Motor neuron (in vitro differentiated cells): ENCODE measurements at regions of chr12 and their contacts with region 1.

Region 1: DNA sequence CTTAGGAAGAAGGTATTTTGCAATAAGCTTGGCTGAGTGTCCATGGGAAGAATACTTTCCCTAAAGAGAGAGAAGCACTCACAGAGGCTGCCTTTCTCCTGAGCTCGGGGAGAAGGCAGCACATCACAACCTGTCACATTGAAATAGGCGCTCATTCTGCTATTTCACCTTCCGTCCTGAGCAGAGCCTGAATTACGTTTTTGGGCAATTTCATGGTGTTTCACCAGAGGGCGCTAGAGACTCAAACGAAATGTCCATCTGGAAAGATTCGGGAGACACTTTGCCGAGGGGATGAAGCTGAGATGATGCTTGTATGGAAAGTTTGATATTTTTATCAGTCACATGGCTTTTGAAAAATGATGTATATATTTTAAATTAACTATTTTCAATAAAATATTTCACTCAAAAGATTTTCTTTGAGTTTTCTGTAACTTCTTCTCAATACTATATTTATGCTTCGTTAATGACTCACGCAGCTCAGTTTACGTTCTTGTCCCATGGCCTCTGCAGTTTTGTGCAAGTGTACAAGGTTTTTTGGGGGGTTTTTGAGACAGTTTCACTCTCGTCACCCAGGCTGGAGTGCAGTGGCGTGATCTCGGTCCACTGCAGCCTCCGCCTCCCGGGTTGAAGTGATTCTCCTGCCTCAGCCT is 17.4 kb upstream of the B4GALNT3 start:
- ATAC-seq: peak in 5 of 8 experiments; percentile 22 to 58 (median 43)
- H3K4me3 ChIP-seq: no peak overlapping the region
- H3K27ac ChIP-seq: no peak overlapping the region
- H3K4me1 ChIP-seq: no peaks in the 10 kb centered on the region

Region 2: DNA sequence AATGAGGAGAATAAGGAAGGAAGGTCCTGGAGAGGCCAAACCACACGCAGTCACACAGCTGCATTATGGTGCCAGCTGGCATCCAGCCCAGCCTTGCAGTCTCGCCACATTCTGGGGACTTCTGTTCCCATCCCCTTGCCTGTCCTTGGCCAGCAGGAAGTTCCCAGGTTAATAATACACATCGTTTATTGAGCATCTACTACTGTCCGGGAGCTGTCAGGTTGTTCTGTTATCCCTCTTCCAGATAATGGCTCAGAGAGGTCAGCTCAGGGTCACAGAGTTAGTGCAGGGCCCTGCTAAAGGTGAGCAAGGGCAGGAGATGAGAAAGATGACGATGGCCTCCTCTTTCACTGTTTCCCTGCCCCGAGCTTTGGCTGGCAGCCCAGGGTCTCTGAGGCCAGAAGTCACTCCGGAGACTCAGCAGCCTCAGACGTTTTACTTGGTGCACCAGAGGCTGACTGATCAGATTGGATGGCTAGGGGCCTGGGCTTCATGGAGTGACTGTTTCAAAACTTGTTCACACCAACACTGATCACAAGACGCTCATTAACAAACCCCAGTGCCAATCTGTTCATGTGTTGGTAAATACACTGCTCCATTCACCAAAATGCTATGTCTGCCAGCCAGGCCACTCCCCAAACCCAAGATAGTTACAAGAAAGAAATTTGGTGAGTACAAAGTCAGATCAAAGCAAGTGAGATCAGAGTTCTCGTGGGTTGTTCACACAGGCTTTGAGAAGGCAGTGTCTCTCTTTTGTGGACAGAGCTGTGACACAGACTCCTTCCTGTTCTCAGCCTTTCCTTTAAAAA is 96.6 kb after region 1 on chr12:
- in situ Hi-C with region 1: loop called in 2 of 9 experiments (anchors 10 kb)
- ATAC-seq: peak in 2 of 8 experiments; percentile 27 to 44
- H3K4me3 ChIP-seq: no peak overlapping the region
- H3K27ac ChIP-seq: no peak overlapping the region
- H3K4me1 ChIP-seq: peaks cover 16 to 19% of the 10 kb centered on the region in 2 donors

Region 3: DNA sequence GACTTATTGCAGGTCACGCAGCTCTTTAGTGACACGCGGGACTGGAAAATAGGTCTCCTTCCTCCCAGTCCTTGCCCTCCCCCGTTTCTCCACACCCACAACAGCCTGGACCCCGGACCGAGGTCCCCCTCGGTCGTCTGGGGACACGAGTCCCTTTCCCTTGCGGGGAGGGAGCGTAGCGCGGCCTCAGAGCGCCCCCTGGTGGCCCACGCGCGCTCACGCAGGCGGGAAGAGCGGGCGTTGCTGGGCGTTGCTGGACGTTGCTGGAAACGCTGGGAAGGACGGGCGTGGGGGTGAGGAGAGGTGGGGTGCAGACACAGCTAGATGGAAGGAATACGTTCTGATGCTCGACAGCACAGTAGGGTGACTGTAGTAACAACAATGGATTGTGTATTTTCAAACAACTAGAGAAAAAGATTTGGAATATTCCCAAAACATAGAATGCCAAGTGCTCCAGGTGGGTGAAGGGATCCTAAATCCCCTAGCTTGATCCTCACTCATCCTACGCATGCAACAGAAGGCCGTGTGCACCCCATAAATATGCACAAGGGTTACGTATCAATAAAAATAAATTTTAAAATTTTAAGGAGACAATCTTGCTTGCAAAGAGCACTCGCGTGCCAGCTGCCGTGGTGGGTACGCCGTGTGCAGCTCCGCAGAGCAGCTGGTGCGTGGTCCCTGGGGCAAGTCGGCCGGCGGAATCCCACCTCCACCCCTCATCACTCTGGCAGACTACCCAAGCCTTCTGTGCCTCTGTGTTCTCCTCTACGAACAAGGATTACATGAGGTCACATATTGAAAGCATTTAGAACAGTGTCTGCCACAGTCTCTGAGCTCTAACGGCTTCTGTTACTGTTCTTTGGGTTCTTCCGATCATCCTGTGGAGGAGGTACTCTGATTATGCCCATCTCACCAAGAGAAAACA is 104.8 kb after region 1 on chr12:
- in situ Hi-C with region 1: loop called in 3 of 9 experiments (anchors 10 kb)
- ATAC-seq: peak; percentile 68 to 92 (median 76)
- H3K4me3 ChIP-seq: peak overlapping the region in 2 of 5 donors; percentile 11 to 24
- H3K27ac ChIP-seq: no peak overlapping the region
- H3K4me1 ChIP-seq: peaks cover 10% of the 10 kb centered on the region in 2 donors

Region 4: GRCh38 chr12:553205-554000 is 111.0 kb after region 1 on chr12:
- in situ Hi-C with region 1: loop called in 3 of 9 experiments (anchors 10 kb)
- ATAC-seq: no peak
- H3K4me3 ChIP-seq: no peak overlapping the region
- H3K27ac ChIP-seq: no peak overlapping the region
- H3K4me1 ChIP-seq: peaks cover 7 to 10% of the 10 kb centered on the region in 2 donors